ENCODE measurements at regions of chr16 and their contacts with region 1.

Region 1: GRCh38 chr16:35713762-35714650 is 2254.6 kb downstream of the TP53TG3F start:
- DNase-seq: peak in 1 of 2 donors; percentile 42
- ATAC-seq: peak; percentile 85 to 97 (median 95)
- H3K4me3 ChIP-seq: no peak overlapping the region
- H3K27ac ChIP-seq: peak overlapping the region in 6 of 10 donors; percentile 21 to 88 (median 71)
- H3K4me1 ChIP-seq: peaks cover 0 to 32% (median 6%) of the 10 kb centered on the region in 9 donors
- H3K27me3 ChIP-seq: no peaks in the 10 kb centered on the region
- CTCF ChIP-seq: no peak

Region 2: DNA sequence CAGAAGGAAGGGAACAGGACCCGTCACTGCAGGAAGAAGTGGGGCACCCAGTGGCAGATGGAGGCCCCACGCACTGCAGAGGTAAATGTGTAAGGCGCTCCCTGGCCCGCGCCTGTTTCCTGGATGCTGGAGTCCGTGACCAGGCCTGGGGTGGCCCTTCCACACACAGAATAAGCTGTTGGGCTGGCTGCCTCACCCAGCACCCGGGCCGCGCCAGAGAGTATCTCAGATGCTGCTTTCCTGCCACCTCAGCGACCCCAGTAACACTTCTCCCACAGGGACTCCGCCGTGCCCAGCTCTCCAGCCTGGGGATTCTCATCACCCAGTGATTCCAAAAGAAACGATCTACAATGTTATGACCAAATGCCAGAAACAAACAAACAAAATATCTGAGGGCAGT is 261.5 kb before region 1 on chr16:
- intact Hi-C with region 1: no loop called
- DNase-seq: no peak
- ATAC-seq: no peak
- H3K4me3 ChIP-seq: no peak overlapping the region
- H3K27ac ChIP-seq: no peak overlapping the region
- H3K4me1 ChIP-seq: no peaks in the 10 kb centered on the region
- H3K27me3 ChIP-seq: no peaks in the 10 kb centered on the region
- CTCF ChIP-seq: no peak

Region 3: DNA sequence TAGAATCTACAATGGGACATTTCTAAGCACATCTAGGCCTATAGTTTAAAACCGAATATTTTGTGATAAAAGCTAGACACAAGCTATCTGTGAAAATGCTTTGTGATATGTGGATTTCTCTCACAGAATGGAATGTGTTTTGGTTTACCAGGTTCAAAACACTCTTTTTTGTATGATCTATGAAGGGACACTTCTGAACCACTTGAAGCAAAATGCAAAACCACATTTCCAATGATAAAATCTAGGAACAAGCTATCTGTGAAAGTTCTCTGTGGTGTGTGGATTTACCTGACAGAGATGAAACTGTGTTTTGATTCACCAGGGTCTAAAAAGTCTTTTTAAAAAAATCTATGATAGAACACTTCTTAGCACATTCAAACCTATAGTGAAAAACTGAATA is 62.2 kb before region 1 on chr16:
- intact Hi-C with region 1: loop called in 2 of 10 experiments (anchors 10 kb)
- DNase-seq: no peak
- ATAC-seq: no peak
- H3K4me3 ChIP-seq: no peak overlapping the region
- H3K27ac ChIP-seq: no peak overlapping the region
- H3K4me1 ChIP-seq: no peaks in the 10 kb centered on the region
- H3K27me3 ChIP-seq: no peaks in the 10 kb centered on the region
- CTCF ChIP-seq: no peak

Region 4: GRCh38 chr16:35862242-35862641 is 148.2 kb after region 1 on chr16:
- intact Hi-C with region 1: no loop called
- DNase-seq: no peak
- ATAC-seq: no peak
- H3K4me3 ChIP-seq: no peak overlapping the region
- H3K27ac ChIP-seq: no peak overlapping the region
- H3K4me1 ChIP-seq: no peaks in the 10 kb centered on the region
- H3K27me3 ChIP-seq: no peaks in the 10 kb centered on the region
- CTCF ChIP-seq: no peak

Region 5: DNA sequence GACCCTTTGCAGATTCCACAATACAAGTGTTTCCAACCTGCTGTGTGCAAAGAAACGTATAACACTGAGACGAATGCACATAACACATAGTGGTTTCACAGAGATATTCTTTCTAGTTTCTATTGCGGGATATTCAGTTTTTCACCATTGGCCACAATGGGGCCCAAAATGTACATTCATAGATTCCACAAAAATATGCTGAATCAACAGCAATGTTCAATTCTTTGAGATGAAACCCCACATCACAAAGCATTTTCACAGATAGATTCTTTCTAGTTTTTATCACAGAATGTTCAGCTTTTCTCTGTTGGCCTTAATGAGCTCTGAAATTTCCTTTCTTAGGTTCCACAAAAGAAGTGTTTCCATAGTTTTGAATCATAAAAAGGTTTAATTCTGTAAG is 217.7 kb after region 1 on chr16:
- intact Hi-C with region 1: no loop called
- DNase-seq: no peak
- ATAC-seq: no peak
- H3K4me3 ChIP-seq: no peak overlapping the region
- H3K27ac ChIP-seq: no peak overlapping the region
- H3K4me1 ChIP-seq: no peaks in the 10 kb centered on the region
- H3K27me3 ChIP-seq: no peaks in the 10 kb centered on the region
- CTCF ChIP-seq: no peak